Ascending aorta (tissue), 2 donors: ENCODE measurements at regions of chr16 and their contacts with region 1.

Region 1: GRCh38 chr16:70454222-70455034 is at the start of gene FCSK:
- DNase-seq: peak in 1 of 2 donors; percentile 75
- H3K4me3 ChIP-seq: peak within 1 kb of the TSS; percentile 87 to 97
- H3K27ac ChIP-seq: peak within 1 kb of the TSS; percentile 85 to 94
- H3K4me1 ChIP-seq: peaks cover 0 to 6% of the 10 kb centered on the region in 2 donors
- H3K27me3 ChIP-seq: no peaks in the 10 kb centered on the region
- CTCF ChIP-seq: no peak
- total RNA-seq, gene FCSK: 54.5 TPM

Region 2: DNA sequence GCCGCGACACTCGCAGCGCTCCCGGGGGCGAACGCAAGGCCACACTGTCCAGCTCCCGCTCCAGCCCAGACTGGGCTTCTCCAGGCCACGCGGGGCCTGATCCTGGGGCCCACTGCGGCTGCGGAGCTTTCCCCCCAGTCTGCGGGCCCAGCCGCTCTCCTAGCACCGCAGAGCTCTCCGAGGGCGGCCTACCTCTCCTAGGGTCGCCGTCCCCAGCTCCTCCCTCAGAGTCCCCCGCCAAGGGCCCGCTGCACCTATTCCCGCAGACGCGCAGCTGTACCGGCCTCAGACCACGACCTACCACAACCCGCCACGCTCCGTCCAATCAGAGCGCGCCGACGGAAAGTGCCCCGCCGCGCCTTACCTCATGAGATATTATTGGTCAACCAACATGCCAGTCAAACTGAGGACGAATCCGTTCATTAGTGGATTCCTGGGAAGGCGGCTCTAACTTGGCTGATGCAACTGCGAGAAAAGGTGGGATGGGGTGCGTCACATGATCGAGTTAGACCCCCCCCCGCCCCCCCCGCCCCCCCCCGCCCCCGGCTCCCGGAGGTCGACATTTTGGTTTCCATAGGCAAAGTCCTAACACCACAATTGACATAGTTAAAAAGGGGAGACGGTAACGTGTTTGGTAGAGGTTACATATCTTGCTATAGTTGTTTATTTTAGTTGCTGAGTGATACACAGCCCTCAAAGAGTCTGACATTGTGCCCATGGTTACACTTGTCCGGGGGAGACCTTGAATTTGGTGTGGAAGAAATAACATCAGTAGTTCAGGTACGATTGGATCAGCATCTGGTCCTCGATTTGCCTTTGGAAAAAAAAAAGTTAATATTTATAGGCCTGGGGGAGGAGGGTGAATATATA is 165.0 kb before region 1 on chr16 and contains the start of gene AARS1:
- intact Hi-C with region 1: no loop called
- DNase-seq: peak; percentile 96 to 99
- H3K4me3 ChIP-seq: peak within 1 kb of the TSS; percentile 77 to 84
- H3K27ac ChIP-seq: peak within 1 kb of the TSS; percentile 88 to 96
- H3K4me1 ChIP-seq: peaks cover 4 to 16% of the 10 kb centered on the region in 2 donors
- H3K27me3 ChIP-seq: no peaks in the 10 kb centered on the region
- CTCF ChIP-seq: no peak
- total RNA-seq, gene AARS1: 19.3 TPM

Region 3: GRCh38 chr16:70438969-70439862 is 15.2 kb before region 1 on chr16 and contains the start of gene ST3GAL2:
- intact Hi-C with region 1: loop called (anchors 1 kb)
- DNase-seq: peak; percentile 85 to 97
- H3K4me3 ChIP-seq: peak within 1 kb of the TSS; percentile 95 to 97
- H3K27ac ChIP-seq: peak within 1 kb of the TSS; percentile 67 to 76
- H3K4me1 ChIP-seq: peaks cover 0 to 20% of the 10 kb centered on the region in 2 donors
- H3K27me3 ChIP-seq: no peaks in the 10 kb centered on the region
- CTCF ChIP-seq: peak in 2 of 3 experiments; percentile 23 to 28
- total RNA-seq, gene ST3GAL2: 52.3 TPM